MCF 10A (cell line): ENCODE measurements at regions of chr3 and their contacts with region 1.

Region 1: GRCh38 chr3:18389108-18389733 is 35.9 kb downstream of the SATB1 start:
- DNase-seq: peak; percentile 44
- H3K4me3 Mint-ChIP-seq: no peak overlapping the region
- H3K27ac Mint-ChIP-seq: no peak overlapping the region
- H3K4me1 Mint-ChIP-seq: no peaks in the 10 kb centered on the region
- H3K27me3 Mint-ChIP-seq: peaks cover 6% of the 10 kb centered on the region
- CTCF ChIP-seq: peak; percentile 42

Region 2: DNA sequence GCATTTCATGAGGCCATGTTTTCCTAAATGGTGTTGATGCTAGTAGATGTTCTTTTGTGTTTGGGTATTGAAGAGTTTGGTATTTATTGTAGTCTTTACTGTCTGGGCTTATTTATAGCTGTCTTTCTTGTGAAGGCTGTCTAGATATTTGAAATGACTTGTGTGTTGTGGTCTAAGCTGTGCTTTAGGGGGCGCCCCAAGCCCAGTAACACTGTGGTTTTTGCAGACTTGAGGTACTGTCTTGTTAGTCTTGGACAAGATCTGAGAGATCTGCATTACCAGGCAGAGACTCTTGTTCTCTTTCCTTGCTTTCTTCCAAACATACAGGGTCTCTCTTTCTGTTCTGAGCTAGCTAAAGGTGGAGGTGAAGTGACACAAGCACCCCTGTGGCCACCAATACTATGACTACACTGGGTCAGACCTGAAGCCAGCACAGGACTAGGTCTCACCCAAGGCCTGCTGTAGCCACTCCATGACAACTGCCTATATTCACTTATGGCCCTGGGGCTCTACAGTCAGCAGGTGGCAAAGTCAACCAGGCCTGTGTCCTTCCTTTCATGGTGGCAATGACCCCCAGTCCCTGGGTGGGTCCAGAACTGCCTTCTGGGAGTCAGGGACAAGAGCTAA is 494.7 kb before region 1 on chr3:
- CTCF ChIA-PET with region 1: interaction called, 3 read pairs
- POLR2A ChIA-PET with region 1: no interaction called
- intact Hi-C with region 1: loop called (anchors 1 kb)
- DNase-seq: peak; percentile 75
- H3K4me3 Mint-ChIP-seq: no peak overlapping the region
- H3K27ac Mint-ChIP-seq: no peak overlapping the region
- H3K4me1 Mint-ChIP-seq: peaks cover 9% of the 10 kb centered on the region
- H3K27me3 Mint-ChIP-seq: no peaks in the 10 kb centered on the region
- CTCF ChIP-seq: peak; percentile 63

Region 3: DNA sequence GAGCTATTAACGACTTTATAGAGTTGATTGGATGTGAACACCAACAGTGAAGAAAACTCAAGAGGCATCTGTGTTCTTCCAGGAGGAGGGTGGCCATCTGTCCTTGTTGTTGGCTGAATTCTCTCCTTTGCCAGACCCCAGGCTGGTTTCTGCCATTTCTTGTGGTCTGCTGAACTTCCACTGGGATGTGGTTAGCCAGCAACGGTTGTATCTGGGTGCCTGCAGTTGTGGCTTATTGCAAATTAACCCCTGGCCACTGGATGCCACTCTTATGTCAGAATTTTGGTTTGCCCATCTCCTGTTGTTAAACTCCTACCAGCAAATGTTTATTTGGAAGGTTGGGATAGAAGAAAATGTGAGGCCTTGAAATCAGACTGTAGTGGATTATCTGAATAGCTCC is 483.2 kb before region 1 on chr3:
- CTCF ChIA-PET with region 1: no interaction called
- POLR2A ChIA-PET with region 1: no interaction called
- intact Hi-C with region 1: loop called (anchors 1 kb)
- DNase-seq: peak; percentile 2
- H3K4me3 Mint-ChIP-seq: no peak overlapping the region
- H3K27ac Mint-ChIP-seq: no peak overlapping the region
- H3K4me1 Mint-ChIP-seq: no peaks in the 10 kb centered on the region
- H3K27me3 Mint-ChIP-seq: no peaks in the 10 kb centered on the region
- CTCF ChIP-seq: no peak

Region 4: DNA sequence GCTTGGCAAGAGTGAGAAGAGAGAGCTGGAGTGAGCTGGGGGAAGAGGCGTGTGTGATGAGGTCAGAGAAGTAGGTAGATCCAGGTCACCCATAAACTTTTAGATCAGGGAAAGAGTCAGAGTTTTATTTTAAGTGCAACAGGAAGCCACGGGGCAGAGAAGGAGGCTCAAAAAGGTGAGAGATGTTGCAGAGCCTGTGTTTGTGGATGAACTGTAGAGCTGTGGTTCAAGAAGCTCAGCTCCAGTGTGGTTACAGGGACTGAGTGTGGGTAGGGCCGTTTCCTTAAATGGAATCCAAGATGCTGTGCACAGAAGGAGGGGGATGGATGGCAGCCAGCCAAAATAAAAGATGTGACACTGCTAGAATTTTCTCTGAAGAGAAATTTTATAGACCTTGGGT is 301.2 kb before region 1 on chr3:
- CTCF ChIA-PET with region 1: no interaction called
- POLR2A ChIA-PET with region 1: no interaction called
- intact Hi-C with region 1: no loop called
- DNase-seq: no peak
- H3K4me3 Mint-ChIP-seq: no peak overlapping the region
- H3K27ac Mint-ChIP-seq: no peak overlapping the region
- H3K4me1 Mint-ChIP-seq: peaks cover 10% of the 10 kb centered on the region
- H3K27me3 Mint-ChIP-seq: no peaks in the 10 kb centered on the region
- CTCF ChIP-seq: no peak

Region 5: GRCh38 chr3:18149386-18149785 is 239.8 kb before region 1 on chr3:
- CTCF ChIA-PET with region 1: interaction called, 10 read pairs
- POLR2A ChIA-PET with region 1: no interaction called
- intact Hi-C with region 1: no loop called
- DNase-seq: no peak
- H3K4me3 Mint-ChIP-seq: no peak overlapping the region
- H3K27ac Mint-ChIP-seq: no peak overlapping the region
- H3K4me1 Mint-ChIP-seq: peaks cover 16% of the 10 kb centered on the region
- H3K27me3 Mint-ChIP-seq: no peaks in the 10 kb centered on the region
- CTCF ChIP-seq: no peak

Region 6: DNA sequence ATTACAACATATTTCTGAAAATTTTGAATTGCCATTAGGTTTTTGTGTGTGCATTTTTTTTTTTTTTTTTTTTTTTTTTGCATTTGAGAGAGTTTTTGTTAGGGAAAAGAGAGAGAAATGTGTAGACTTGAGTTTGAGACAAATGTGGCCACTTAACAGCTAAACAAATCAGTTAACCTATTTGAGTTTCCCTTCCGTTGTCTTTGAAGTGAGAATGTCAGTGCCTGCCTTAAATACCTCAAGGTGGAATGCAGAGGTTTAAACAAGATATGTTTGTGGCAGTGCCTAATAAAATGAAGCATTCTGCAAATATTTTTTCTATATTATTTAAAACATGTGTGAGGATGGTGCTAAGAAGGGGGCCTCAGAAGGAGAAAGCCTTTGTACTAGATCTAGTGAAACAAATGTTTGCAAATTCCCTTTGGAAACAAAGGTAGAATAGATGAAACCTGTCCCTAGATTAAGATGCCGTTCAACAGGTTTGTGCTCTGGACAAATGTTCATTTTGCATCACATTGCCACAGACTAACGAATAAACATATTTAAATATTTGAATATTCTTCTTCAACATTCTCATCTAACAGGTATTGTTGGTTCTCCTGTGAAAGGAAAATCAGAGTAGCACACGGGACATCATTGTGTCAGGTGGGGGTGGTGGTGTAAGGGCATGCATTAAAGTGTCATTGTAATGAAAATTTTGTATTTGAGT is 44.8 kb before region 1 on chr3:
- CTCF ChIA-PET with region 1: no interaction called
- POLR2A ChIA-PET with region 1: no interaction called
- intact Hi-C with region 1: no loop called
- DNase-seq: no peak
- H3K4me3 Mint-ChIP-seq: no peak overlapping the region
- H3K27ac Mint-ChIP-seq: no peak overlapping the region
- H3K4me1 Mint-ChIP-seq: no peaks in the 10 kb centered on the region
- H3K27me3 Mint-ChIP-seq: peaks cover 60% of the 10 kb centered on the region
- CTCF ChIP-seq: no peak

Region 7: GRCh38 chr3:18401300-18401961 is 12.2 kb after region 1 on chr3:
- CTCF ChIA-PET with region 1: interaction called, 12 read pairs
- POLR2A ChIA-PET with region 1: no interaction called
- intact Hi-C with region 1: no loop called
- DNase-seq: no peak
- H3K4me3 Mint-ChIP-seq: no peak overlapping the region
- H3K27ac Mint-ChIP-seq: no peak overlapping the region
- H3K4me1 Mint-ChIP-seq: no peaks in the 10 kb centered on the region
- H3K27me3 Mint-ChIP-seq: peaks cover 52% of the 10 kb centered on the region
- CTCF ChIP-seq: no peak